PC-3 (cell line): ENCODE measurements at regions of chr1 and their contacts with region 1.

Region 1: DNA sequence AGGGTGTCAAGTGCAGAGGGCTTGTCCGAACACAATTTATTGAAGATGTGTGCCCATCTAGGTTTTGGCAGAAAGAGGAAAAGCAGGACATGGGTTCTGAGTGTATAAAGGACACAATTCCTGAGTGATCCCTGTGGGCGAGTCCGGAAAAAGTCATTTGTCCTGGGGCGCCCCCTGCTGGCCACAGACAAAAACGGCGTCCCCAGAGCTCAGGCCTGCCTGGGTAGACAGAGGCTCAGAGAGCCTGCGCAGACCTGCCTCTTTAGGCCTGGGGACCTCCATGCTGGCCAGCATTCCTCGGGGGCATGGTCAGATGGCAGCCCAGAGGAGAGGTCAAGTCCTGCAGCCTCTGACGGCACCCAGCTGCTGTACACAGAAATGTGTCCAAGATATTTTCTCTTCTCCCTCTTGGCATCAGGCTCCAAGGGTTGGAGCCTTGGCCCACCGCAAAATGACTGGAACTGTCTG is 65.5 kb upstream of the LRP8 start:
- DNase-seq: peak; percentile 82
- ATAC-seq: peak; percentile 93
- H3K4me3 ChIP-seq: no peak overlapping the region
- H3K27ac ChIP-seq: no peak overlapping the region
- H3K4me1 ChIP-seq: no peaks in the 10 kb centered on the region
- H3K27me3 ChIP-seq: peaks cover 18% of the 10 kb centered on the region
- CTCF ChIP-seq: peak; percentile 95

Region 2: DNA sequence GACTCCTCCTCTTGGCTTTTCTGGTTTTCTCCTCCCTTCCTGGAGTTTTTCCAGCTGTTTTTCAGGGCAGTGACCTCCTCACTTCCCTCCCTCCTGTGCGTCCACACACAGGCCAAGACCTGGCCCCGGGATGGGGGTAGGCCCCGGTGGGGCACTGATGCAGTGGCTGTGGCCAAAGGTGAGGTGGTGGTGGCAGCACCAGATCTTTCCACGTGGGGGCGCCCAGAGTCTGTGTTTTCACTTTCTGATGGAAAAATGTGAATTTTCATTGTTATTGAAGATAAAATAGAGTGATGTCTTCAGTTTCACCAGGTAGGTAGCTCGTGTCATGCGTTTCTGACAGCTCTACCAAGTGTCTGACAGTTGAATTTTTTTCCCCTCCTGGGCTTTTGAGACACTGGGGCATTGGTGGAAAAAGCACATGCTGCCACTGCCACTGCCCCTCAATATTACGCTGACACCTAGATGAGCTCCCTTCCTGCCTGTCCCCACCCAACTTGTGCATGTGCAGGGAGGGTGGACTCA is 115.1 kb before region 1 on chr1:
- CTCF ChIA-PET with region 1: interaction called, 9 read pairs
- POLR2A ChIA-PET with region 1: no interaction called
- intact Hi-C with region 1: loop called (anchors 1 kb)
- DNase-seq: peak; percentile 58
- ATAC-seq: peak; percentile 60
- H3K4me3 ChIP-seq: no peak overlapping the region
- H3K27ac ChIP-seq: no peak overlapping the region
- H3K4me1 ChIP-seq: peaks cover 16% of the 10 kb centered on the region
- H3K27me3 ChIP-seq: no peaks in the 10 kb centered on the region
- CTCF ChIP-seq: peak; percentile 92

Region 3: GRCh38 chr1:53326088-53326597 is 67.2 kb before region 1 on chr1:
- CTCF ChIA-PET with region 1: no interaction called
- POLR2A ChIA-PET with region 1: no interaction called
- intact Hi-C with region 1: loop called (anchors 2 kb)
- DNase-seq: peak; percentile 97
- ATAC-seq: peak; percentile 86
- H3K4me3 ChIP-seq: peak overlapping the region; percentile 89
- H3K27ac ChIP-seq: peak overlapping the region; percentile 92
- H3K4me1 ChIP-seq: peaks cover 17% of the 10 kb centered on the region
- H3K27me3 ChIP-seq: no peaks in the 10 kb centered on the region
- CTCF ChIP-seq: no peak